Sciatic nerve (tissue), 2 donors: ENCODE measurements at regions of chr6 and their contacts with region 1.

Region 1: GRCh38 chr6:31210123-31210522 is 39.6 kb upstream of the POU5F1 start:
- DNase-seq: no peak
- ATAC-seq: no peak

Region 2: GRCh38 chr6:31246050-31246521 is 36.0 kb after region 1 on chr6:
- intact Hi-C with region 1: no loop called
- DNase-seq: no peak
- ATAC-seq: no peak

Region 3: DNA sequence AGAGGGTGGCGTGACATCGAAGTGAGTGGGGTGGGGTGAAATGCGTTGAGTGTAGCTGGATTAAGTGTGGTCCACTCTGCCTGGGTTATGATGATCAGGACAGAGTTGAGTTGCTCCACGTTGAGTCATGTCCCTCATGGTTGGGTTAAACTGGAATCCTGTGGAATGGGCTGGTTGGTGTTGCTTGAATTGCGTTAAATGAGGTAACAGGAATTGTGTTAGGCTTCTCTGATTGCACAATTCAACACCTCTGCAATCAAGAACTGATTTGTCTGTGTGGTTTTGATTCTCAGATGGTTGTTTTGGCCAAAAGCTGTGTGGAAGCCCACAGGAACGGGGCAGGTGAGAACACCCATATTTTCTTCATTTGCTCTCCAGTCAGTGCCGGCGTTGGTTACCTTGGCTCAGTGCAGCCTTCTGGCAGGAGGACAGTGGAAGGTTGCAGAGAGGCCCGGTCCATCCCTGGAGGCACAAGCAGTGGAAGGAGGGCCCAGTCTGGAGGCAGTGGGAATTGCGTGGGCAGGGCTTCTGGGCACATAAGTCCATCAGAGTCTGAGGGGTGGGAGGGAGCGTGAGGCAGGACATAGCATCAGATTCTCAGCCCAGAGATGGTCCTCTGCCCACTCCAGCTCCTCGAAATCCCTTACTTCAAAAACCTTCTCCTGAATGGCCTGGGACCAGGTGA is 1002.1 kb after region 1 on chr6:
- intact Hi-C with region 1: loop called (anchors 5 kb)
- DNase-seq: no peak
- ATAC-seq: no peak